CD4-positive, alpha-beta memory T cell (primary cell): ENCODE measurements at regions of chr5 and their contacts with region 1.

Region 1: DNA sequence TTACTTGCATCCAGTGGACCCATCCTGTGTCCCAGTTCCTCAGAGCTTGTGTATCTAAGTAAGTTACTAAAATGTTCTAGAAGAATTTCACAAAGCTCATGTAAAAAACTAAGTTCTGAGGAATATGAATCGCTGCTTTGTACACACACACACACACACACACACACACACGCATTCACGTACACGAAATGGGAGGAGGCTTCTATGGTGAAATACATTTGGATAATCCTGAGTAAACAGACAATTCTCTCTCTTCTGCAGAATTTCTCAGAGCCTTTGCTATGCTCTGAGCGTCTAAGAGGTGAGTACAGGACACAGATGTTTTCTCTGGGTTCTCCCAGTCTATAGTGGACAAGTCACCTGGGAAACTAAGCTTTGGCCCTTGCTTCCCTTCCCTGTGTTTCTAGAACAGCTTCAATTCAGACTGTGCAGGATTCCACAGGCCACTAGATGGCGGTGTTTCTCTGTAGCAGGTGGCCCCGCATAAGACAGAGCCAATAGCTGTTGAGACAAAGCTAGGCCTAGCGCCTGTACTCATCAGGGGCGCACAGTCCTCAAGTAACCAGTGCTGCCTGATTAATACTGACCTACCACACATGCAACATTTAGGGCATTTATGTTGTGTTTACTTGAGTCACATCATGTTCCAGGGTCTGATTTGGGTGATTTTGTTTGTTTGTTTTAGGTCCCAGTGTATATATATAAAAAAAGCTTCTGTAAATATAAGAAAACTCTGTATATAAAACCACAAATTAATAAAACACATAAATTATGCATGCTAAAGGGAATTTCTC is 114.8 kb downstream of the LIFR start:
- DNase-seq: peak; percentile 65 to 74 (median 72)
- H3K4me3 ChIP-seq: no peak overlapping the region
- H3K4me3 Mint-ChIP-seq: no peak overlapping the region
- H3K27ac ChIP-seq: no peak overlapping the region
- H3K27ac Mint-ChIP-seq: peak overlapping the region in 1 of 7 donors; percentile 68
- H3K4me1 ChIP-seq: no peaks in the 10 kb centered on the region
- H3K4me1 Mint-ChIP-seq: peaks cover 0 to 2% (median 0%) of the 10 kb centered on the region in 4 donors
- H3K27me3 ChIP-seq: peaks cover 3% of the 10 kb centered on the region
- H3K27me3 Mint-ChIP-seq: peaks cover 16 to 27% of the 10 kb centered on the region in 2 donors

Region 2: GRCh38 chr5:38420691-38421390 is 20.8 kb before region 1 on chr5:
- CTCF ChIA-PET with region 1: interaction called, 14 read pairs
- POLR2A ChIA-PET with region 1: no interaction called
- intact Hi-C with region 1: no loop called
- DNase-seq: peak in 1 of 5 donors; percentile 14
- H3K4me3 ChIP-seq: no peak overlapping the region
- H3K4me3 Mint-ChIP-seq: no peak overlapping the region
- H3K27ac ChIP-seq: no peak overlapping the region
- H3K27ac Mint-ChIP-seq: no peak overlapping the region
- H3K4me1 ChIP-seq: no peaks in the 10 kb centered on the region
- H3K4me1 Mint-ChIP-seq: no peaks in the 10 kb centered on the region
- H3K27me3 ChIP-seq: no peaks in the 10 kb centered on the region
- H3K27me3 Mint-ChIP-seq: peaks cover 9 to 14% of the 10 kb centered on the region in 2 donors

Region 3: DNA sequence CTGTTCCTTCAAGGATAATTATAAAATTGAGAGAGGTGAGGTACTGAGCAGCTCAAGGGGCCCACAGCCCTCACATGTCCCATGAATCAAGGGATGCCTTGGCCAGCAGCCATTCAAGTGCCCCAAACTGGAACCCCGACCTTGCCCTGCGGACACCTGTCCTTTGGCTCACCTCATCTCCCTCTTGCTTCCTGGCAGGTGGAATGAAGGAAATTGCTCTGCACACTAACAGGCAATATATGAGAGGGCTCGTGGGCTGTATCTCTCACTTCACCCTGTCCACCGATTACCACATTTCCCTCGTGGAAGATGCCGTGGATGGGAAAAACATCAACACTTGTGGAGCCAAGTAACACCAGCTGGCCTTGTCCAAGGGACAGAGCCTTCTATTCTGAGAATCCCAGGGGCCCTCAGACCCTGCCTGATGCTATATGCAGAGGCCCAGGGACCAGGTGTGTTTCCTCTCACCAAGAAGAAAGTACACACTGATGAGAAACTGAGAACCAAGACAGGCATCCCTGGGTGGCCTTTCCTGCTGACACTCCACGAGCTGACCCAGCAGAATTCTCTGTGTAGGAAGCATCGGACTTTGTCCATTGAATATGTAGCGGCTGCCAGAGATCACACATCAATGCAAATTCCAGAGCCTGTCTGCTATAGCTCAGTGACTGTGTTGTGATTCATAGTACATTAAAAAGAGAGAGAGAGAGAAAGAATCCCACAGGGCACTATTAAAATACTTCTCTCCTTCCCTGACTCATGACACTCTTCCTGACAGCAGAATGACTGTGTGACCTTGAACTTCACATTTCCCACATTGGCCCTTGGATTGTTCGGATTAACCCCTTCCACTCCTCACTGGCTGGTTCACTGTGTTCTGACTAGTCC is 22.2 kb after region 1 on chr5:
- CTCF ChIA-PET with region 1: interaction called, 13 read pairs
- POLR2A ChIA-PET with region 1: no interaction called
- intact Hi-C with region 1: no loop called
- DNase-seq: no peak
- H3K4me3 ChIP-seq: no peak overlapping the region
- H3K4me3 Mint-ChIP-seq: no peak overlapping the region
- H3K27ac ChIP-seq: no peak overlapping the region
- H3K27ac Mint-ChIP-seq: no peak overlapping the region
- H3K4me1 ChIP-seq: no peaks in the 10 kb centered on the region
- H3K4me1 Mint-ChIP-seq: no peaks in the 10 kb centered on the region
- H3K27me3 ChIP-seq: no peaks in the 10 kb centered on the region
- H3K27me3 Mint-ChIP-seq: peaks cover 19 to 22% of the 10 kb centered on the region in 2 donors

Region 4: GRCh38 chr5:38551030-38552017 is 109.7 kb after region 1 on chr5:
- CTCF ChIA-PET with region 1: interaction called, 14 read pairs
- POLR2A ChIA-PET with region 1: no interaction called
- intact Hi-C with region 1: no loop called
- DNase-seq: no peak
- H3K4me3 ChIP-seq: no peak overlapping the region
- H3K4me3 Mint-ChIP-seq: no peak overlapping the region
- H3K27ac ChIP-seq: no peak overlapping the region
- H3K27ac Mint-ChIP-seq: no peak overlapping the region
- H3K4me1 ChIP-seq: peaks cover 4% of the 10 kb centered on the region
- H3K4me1 Mint-ChIP-seq: peaks cover 4 to 10% (median 6%) of the 10 kb centered on the region in 4 donors
- H3K27me3 ChIP-seq: peaks cover 9% of the 10 kb centered on the region
- H3K27me3 Mint-ChIP-seq: peaks cover 31 to 35% of the 10 kb centered on the region in 2 donors

Region 5: DNA sequence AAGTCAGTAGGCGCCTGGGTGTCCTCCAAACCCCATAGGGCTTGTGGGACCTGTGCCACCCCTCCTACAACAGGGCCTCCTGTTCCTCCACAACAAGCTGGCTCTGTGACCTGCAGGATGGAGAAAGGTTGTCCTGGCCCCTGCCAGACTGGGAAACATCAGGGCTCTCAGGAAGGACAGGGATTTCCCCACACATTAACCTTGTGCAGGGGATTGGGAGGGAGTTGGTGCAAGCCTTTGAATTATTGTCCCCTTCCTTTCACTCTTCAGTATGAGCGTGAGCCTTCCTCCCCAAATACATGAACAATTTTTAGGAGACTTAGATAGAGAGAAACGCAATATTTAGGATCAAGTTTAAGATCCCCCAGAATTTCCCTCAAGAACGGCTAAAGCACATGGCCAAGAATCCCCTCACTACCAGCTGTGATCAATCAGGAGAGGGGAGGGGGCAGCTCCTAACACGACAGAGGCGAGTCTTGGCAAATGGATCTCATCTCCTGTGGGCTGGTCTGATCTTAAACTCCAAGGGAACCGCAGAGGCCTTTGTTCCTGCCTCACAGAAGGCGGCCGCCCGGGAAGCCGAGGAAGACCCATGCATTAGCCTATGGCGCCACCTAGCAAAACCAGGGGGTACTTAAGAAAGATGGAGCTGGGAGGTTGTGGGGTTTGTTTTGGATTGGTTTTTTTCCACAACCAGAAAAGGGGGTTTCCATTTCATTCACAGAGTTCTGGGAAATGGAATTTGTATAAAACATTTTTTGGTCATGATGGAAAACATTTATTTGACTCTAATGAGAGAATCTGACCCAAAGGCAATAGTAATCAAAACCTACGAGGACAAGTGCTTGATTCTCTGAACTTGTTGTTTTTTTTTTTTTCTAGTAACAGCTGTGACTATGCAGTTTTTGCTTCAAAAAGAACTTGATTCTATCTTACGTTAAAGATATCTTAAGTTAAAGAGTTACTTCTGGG is 368.0 kb after region 1 on chr5:
- CTCF ChIA-PET with region 1: interaction called, 38 read pairs
- POLR2A ChIA-PET with region 1: no interaction called
- intact Hi-C with region 1: no loop called
- DNase-seq: peak; percentile 21 to 38 (median 25)
- H3K4me3 ChIP-seq: no peak overlapping the region
- H3K4me3 Mint-ChIP-seq: no peak overlapping the region
- H3K27ac ChIP-seq: no peak overlapping the region
- H3K27ac Mint-ChIP-seq: no peak overlapping the region
- H3K4me1 ChIP-seq: no peaks in the 10 kb centered on the region
- H3K4me1 Mint-ChIP-seq: peaks cover 0 to 3% (median 0%) of the 10 kb centered on the region in 4 donors
- H3K27me3 ChIP-seq: no peaks in the 10 kb centered on the region
- H3K27me3 Mint-ChIP-seq: peaks cover 12 to 19% of the 10 kb centered on the region in 2 donors

Region 6: GRCh38 chr5:39080597-39081204 is 639.1 kb after region 1 on chr5:
- CTCF ChIA-PET with region 1: interaction called, 22 read pairs
- POLR2A ChIA-PET with region 1: no interaction called
- intact Hi-C with region 1: loop called (anchors 2 kb)
- DNase-seq: peak in 2 of 5 donors; percentile 27 to 31
- H3K4me3 ChIP-seq: no peak overlapping the region
- H3K4me3 Mint-ChIP-seq: no peak overlapping the region
- H3K27ac ChIP-seq: no peak overlapping the region
- H3K27ac Mint-ChIP-seq: peak overlapping the region in 1 of 7 donors; percentile 70
- H3K4me1 ChIP-seq: peaks cover 15% of the 10 kb centered on the region
- H3K4me1 Mint-ChIP-seq: peaks cover 8 to 15% (median 11%) of the 10 kb centered on the region in 4 donors
- H3K27me3 ChIP-seq: peaks cover 29% of the 10 kb centered on the region
- H3K27me3 Mint-ChIP-seq: peaks cover 31 to 47% of the 10 kb centered on the region in 2 donors

Region 7: DNA sequence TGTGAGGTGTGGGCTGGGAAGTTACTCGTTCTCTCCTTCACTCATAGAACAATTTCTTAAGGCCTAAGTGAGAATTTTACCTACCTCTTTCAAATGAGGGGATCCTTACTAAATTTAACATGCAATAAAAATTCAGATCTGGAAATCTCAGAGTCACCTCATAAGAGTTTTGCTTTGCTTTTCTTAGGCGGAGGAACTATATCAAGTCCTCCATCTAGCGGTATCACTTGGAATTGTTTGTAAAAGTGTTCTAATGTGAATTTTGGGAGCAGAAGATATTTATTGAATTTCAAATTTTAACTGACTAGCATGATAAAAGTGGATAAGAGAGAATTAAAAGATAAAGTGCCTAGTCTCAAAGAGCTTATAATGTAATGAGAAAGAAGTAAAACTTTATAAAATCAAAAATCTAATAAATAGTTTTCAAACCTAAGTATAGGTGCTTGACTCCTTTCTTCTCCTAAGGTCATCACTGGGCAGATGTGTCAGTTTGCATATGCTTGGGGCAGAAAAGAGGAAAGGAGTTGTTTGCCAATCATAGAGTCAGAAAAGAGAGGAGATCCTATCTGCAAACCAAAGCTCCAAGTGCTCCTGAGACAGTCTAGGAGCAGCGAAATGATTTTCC is 1128.9 kb after region 1 on chr5:
- CTCF ChIA-PET with region 1: interaction called, 14 read pairs
- POLR2A ChIA-PET with region 1: no interaction called
- intact Hi-C with region 1: loop called (anchors 1 kb)
- DNase-seq: peak in 4 of 5 donors; percentile 11 to 22 (median 20)
- H3K4me3 ChIP-seq: no peak overlapping the region
- H3K4me3 Mint-ChIP-seq: no peak overlapping the region
- H3K27ac ChIP-seq: no peak overlapping the region
- H3K27ac Mint-ChIP-seq: no peak overlapping the region
- H3K4me1 ChIP-seq: no peaks in the 10 kb centered on the region
- H3K4me1 Mint-ChIP-seq: peaks cover 0 to 2% (median under 1%) of the 10 kb centered on the region in 4 donors
- H3K27me3 ChIP-seq: no peaks in the 10 kb centered on the region
- H3K27me3 Mint-ChIP-seq: peaks cover 1 to 13% of the 10 kb centered on the region in 2 donors